ENCODE measurements at regions of chr12 and their contacts with region 1.

Region 1: DNA sequence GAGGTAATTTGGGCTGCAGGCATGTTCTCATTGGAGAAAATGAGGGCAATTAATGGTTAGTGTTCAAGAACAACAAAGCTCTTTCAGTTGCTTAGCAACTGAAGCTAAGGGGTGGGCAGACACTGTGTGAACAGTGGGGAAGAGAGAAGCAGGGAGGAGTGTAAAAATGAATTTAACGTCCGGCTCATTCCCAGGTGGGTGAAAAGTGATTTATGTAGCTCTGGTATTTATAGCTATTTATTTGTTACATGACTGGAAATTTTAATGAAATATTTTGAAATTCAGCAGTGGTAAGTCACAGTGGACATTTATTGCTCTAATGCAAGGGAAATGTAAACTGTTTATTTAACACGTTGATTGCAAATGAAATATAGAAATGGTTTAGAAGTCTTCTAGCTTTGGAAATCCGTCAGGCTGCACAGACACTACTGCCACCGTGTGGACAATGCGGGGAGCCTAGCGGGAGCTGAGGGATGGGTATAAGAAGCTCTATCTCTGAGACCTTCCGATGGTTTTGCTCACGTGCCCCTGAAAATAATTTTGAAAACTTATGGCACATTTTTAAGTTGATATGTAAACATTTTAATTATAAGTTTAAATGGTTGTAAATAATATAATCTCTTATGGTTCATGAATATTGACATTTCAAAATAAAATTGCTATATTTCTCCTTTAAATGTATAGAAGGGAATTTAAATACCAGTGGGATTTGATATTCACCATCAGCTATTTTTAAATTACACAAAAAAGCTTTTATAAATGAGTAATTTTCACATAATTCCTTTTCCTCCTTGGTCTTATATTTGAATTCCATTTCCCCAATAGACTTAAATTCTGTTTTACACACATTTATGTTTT is 54.4 kb downstream of the E2F7 start:
- DNase-seq: peak; percentile 86
- H3K4me3 ChIP-seq: peak overlapping the region; percentile 6
- H3K27ac ChIP-seq: no peak overlapping the region
- H3K4me1 ChIP-seq: no peaks in the 10 kb centered on the region
- H3K27me3 ChIP-seq: no peaks in the 10 kb centered on the region
- CTCF ChIP-seq: peak; percentile 99

Region 2: GRCh38 chr12:76621582-76622024 is 389.3 kb before region 1 on chr12:
- CTCF ChIA-PET with region 1: interaction called, 20 read pairs
- POLR2A ChIA-PET with region 1: no interaction called
- intact Hi-C with region 1: loop called (anchors 1 kb)
- DNase-seq: peak; percentile 75
- H3K4me3 ChIP-seq: no peak overlapping the region
- H3K27ac ChIP-seq: no peak overlapping the region
- H3K4me1 ChIP-seq: no peaks in the 10 kb centered on the region
- H3K27me3 ChIP-seq: no peaks in the 10 kb centered on the region
- CTCF ChIP-seq: peak; percentile 93

Region 3: GRCh38 chr12:76790564-76791552 is 220.1 kb before region 1 on chr12:
- CTCF ChIA-PET with region 1: no interaction called
- POLR2A ChIA-PET with region 1: no interaction called
- intact Hi-C with region 1: loop called (anchors 10 kb)
- DNase-seq: peak; percentile 42
- H3K4me3 ChIP-seq: no peak overlapping the region
- H3K27ac ChIP-seq: no peak overlapping the region
- H3K4me1 ChIP-seq: no peaks in the 10 kb centered on the region
- H3K27me3 ChIP-seq: no peaks in the 10 kb centered on the region
- CTCF ChIP-seq: peak; percentile 69

Region 4: GRCh38 chr12:76820888-76821482 is 189.9 kb before region 1 on chr12:
- CTCF ChIA-PET with region 1: interaction called, 8 read pairs
- POLR2A ChIA-PET with region 1: no interaction called
- intact Hi-C with region 1: loop called (anchors 10 kb)
- DNase-seq: peak; percentile 61
- H3K4me3 ChIP-seq: no peak overlapping the region
- H3K27ac ChIP-seq: no peak overlapping the region
- H3K4me1 ChIP-seq: no peaks in the 10 kb centered on the region
- H3K27me3 ChIP-seq: no peaks in the 10 kb centered on the region
- CTCF ChIP-seq: peak; percentile 73

Region 5: GRCh38 chr12:76848132-76848531 is 162.8 kb before region 1 on chr12:
- CTCF ChIA-PET with region 1: no interaction called
- POLR2A ChIA-PET with region 1: no interaction called
- intact Hi-C with region 1: no loop called
- DNase-seq: no peak
- H3K4me3 ChIP-seq: no peak overlapping the region
- H3K27ac ChIP-seq: no peak overlapping the region
- H3K4me1 ChIP-seq: no peaks in the 10 kb centered on the region
- H3K27me3 ChIP-seq: no peaks in the 10 kb centered on the region
- CTCF ChIP-seq: no peak

Region 6: GRCh38 chr12:76952995-76953394 is 57.9 kb before region 1 on chr12:
- CTCF ChIA-PET with region 1: interaction called, 5 read pairs
- POLR2A ChIA-PET with region 1: no interaction called
- intact Hi-C with region 1: loop called (anchors 5 kb)
- DNase-seq: no peak
- H3K4me3 ChIP-seq: no peak overlapping the region
- H3K27ac ChIP-seq: no peak overlapping the region
- H3K4me1 ChIP-seq: peaks cover 4% of the 10 kb centered on the region
- H3K27me3 ChIP-seq: no peaks in the 10 kb centered on the region
- CTCF ChIP-seq: peak; percentile 36

Region 7: GRCh38 chr12:77031745-77032144 is 20.8 kb after region 1 on chr12:
- CTCF ChIA-PET with region 1: no interaction called
- POLR2A ChIA-PET with region 1: no interaction called
- intact Hi-C with region 1: no loop called
- DNase-seq: no peak
- H3K4me3 ChIP-seq: no peak overlapping the region
- H3K27ac ChIP-seq: no peak overlapping the region
- H3K4me1 ChIP-seq: no peaks in the 10 kb centered on the region
- H3K27me3 ChIP-seq: no peaks in the 10 kb centered on the region
- CTCF ChIP-seq: no peak